ENCODE measurements at regions of chr11 and their contacts with region 1.

Region 1: GRCh38 chr11:62841361-62842184 is 2.2 kb upstream of the WDR74 start:
- DNase-seq: peak; percentile 62 to 90 (median 86)
- H3K4me3 ChIP-seq: peak overlapping the region; percentile 65 to 100 (median 95)
- H3K27ac ChIP-seq: peak overlapping the region; percentile 88 to 100 (median 99)
- H3K27me3 ChIP-seq: no peaks in the 10 kb centered on the region
- CTCF ChIP-seq: peak in 4 of 56 donors; percentile 4 to 28 (median 18)

Region 2: GRCh38 chr11:62855571-62856332 is 14.2 kb after region 1 on chr11:
- intact Hi-C with region 1: loop called in 1 of 2 experiments (anchors 1 kb)
- DNase-seq: peak; percentile 91 to 97 (median 94)
- H3K4me3 ChIP-seq: peak overlapping the region; percentile 64 to 100 (median 90)
- H3K27ac ChIP-seq: peak overlapping the region; percentile 31 to 94 (median 82)
- H3K27me3 ChIP-seq: no peaks in the 10 kb centered on the region
- CTCF ChIP-seq: peak in 47 of 56 donors; percentile 15 to 65 (median 40)

Region 3: GRCh38 chr11:62880803-62881578 is 39.4 kb after region 1 on chr11 and contains the start of gene SLC3A2:
- intact Hi-C with region 1: loop called in 1 of 2 experiments (anchors 2 kb)
- DNase-seq: peak; percentile 77 to 90 (median 85)
- H3K4me3 ChIP-seq: peak within 1 kb of the TSS; percentile 59 to 100 (median 95)
- H3K27ac ChIP-seq: peak within 1 kb of the TSS; percentile 91 to 100 (median 99)
- H3K27me3 ChIP-seq: no peaks in the 10 kb centered on the region
- CTCF ChIP-seq: peak; percentile 52 to 96 (median 85)
- total RNA-seq, gene SLC3A2: 101 to 299 (median 140) TPM